ENCODE measurements at regions of chr1 and their contacts with region 1.

Region 1: GRCh38 chr1:29017235-29017634 is 102.9 kb downstream of the EPB41 start:
- DNase-seq: no peak
- H3K4me3 ChIP-seq: no peak overlapping the region
- H3K27ac ChIP-seq: no peak overlapping the region
- H3K4me1 ChIP-seq: no peaks in the 10 kb centered on the region
- H3K27me3 ChIP-seq: no peaks in the 10 kb centered on the region
- CTCF ChIP-seq: no peak
- EP300 ChIP-seq: no peak
- POLR2A ChIP-seq: no peak

Region 2: DNA sequence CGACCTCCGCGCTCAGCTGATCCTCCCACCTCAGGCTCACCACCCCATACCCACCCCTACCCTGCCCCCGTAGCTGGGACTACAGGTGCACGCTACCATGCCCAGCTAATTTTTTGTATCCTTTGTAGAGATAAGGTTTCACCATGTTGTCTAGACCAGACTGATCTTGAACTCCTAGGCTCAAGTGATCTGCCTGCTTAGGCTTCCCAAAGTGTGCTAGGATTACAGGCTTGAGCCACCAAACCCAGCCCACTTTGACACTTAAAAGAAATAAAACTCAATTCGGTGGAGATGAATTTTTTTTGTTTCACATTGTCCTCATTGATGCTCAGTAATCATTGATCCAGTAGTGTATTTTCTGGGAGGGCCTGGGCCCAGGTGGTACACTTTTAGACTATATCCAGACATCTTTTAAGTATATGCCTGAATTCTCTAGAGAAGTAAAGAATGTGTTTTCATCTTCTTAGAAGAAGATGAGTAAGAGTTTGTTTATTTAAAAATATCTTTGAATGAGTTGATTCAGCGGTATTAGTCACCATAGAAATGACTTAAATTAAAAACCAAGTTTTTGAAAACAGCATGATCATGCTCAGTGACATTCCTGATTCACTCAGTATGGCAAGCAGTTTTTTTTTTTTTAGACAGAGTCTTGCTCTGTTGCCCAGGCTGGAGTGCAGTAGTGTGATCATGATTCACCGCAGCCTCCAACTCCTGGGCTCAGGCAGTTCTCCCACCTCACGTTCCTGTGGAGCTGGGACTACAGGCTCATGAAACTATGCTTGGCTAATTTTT is 45.1 kb before region 1 on chr1:
- intact Hi-C with region 1: no loop called
- DNase-seq: peak in 2 of 5 donors; percentile 29 to 41
- H3K4me3 ChIP-seq: no peak overlapping the region
- H3K27ac ChIP-seq: no peak overlapping the region
- H3K4me1 ChIP-seq: peaks cover 2% of the 10 kb centered on the region
- H3K27me3 ChIP-seq: no peaks in the 10 kb centered on the region
- CTCF ChIP-seq: no peak
- EP300 ChIP-seq: no peak
- POLR2A ChIP-seq: no peak

Region 3: DNA sequence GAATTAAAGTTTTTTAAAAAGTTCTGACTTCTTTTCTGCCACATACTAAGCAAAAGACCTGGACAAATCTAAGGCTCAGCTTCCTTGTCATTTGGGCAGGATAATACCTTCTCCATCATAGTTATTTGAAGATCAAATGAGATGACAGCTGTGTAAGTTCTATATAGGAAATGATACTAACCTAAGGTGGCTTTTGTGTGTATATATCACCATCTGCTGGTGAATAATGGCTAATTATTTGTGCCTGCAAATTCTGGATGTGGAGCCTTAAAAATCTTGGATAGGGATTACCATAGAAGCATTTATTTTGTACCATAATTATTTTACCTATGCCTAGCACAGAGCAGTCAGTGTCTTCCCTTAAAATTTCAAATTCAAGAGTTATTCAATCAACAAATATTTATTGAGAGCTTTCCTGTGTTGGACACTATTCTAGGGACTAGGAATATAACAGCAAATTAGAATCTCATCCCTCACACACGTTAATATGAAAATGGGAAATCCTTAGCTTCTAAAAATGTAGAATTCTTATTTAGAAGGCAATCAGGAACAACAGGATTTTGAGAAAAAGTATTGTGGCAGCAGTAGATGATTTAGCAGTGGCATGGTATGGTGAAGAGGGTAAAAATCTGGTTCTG is 16.7 kb after region 1 on chr1:
- intact Hi-C with region 1: no loop called
- DNase-seq: no peak
- H3K4me3 ChIP-seq: no peak overlapping the region
- H3K27ac ChIP-seq: no peak overlapping the region
- H3K4me1 ChIP-seq: no peaks in the 10 kb centered on the region
- H3K27me3 ChIP-seq: no peaks in the 10 kb centered on the region
- CTCF ChIP-seq: peak in 2 of 3 donors; percentile 78 to 80
- EP300 ChIP-seq: no peak
- POLR2A ChIP-seq: no peak

Region 4: DNA sequence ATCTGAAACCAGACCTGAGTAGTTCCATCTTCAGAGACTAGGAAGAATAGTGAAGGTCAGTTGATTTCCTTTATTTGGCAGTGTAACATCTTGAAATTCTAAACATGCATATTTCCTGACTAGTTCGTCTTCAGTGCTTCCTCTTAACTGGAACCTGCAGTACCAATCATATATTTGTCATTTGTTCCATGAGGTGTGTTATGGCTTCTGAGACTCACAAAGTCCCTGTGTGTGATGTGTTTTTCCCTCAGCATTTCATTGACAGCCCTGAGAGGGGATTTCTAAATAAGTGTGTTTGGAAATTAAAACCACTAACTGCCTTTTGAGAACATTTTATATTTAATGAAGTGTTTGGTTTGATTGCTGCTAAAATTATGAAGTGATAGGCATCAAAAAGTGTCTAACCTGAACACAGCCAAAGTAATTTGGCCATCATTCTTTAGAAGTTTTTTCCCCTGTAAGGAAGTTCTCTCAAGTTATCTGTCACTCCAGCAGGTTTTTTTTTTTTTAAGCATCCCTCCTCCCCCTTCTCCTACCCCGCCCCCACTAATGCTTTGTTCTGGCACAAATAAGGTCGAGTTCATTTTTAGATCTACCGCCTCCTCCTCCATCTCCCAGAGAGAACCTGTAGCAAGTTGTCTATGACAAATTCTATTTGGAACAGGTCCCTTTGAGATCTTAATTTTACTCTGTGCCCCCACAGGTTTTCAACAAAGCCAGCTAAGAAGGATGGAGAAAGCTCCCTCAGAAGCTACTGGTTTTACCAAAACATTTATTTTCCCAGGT is 45.1 kb after region 1 on chr1:
- intact Hi-C with region 1: loop called in 1 of 4 experiments (anchors 1 kb)
- DNase-seq: no peak
- H3K4me3 ChIP-seq: no peak overlapping the region
- H3K27ac ChIP-seq: no peak overlapping the region
- H3K4me1 ChIP-seq: no peaks in the 10 kb centered on the region
- H3K27me3 ChIP-seq: no peaks in the 10 kb centered on the region
- CTCF ChIP-seq: no peak
- EP300 ChIP-seq: no peak
- POLR2A ChIP-seq: no peak

Measured in ovary (tissue), 10 donors.